Tibial artery (tissue), 4 donors: ENCODE measurements at regions of chr9 and their contacts with region 1.

Region 1: GRCh38 chr9:113275157-113276131 is at the starts of genes CDC26 and PRPF4:
- DNase-seq: peak; percentile 97 to 98
- H3K4me3 ChIP-seq: peak within 1 kb of the TSS; percentile 87 to 93
- H3K27ac ChIP-seq: peak within 1 kb of the TSS; percentile 87 to 93
- H3K4me1 ChIP-seq: peaks cover 0 to 28% (median 18%) of the 10 kb centered on the region in 4 donors
- H3K27me3 ChIP-seq: no peaks in the 10 kb centered on the region
- CTCF ChIP-seq: peak in 1 of 2 experiments; percentile 23

Region 2: DNA sequence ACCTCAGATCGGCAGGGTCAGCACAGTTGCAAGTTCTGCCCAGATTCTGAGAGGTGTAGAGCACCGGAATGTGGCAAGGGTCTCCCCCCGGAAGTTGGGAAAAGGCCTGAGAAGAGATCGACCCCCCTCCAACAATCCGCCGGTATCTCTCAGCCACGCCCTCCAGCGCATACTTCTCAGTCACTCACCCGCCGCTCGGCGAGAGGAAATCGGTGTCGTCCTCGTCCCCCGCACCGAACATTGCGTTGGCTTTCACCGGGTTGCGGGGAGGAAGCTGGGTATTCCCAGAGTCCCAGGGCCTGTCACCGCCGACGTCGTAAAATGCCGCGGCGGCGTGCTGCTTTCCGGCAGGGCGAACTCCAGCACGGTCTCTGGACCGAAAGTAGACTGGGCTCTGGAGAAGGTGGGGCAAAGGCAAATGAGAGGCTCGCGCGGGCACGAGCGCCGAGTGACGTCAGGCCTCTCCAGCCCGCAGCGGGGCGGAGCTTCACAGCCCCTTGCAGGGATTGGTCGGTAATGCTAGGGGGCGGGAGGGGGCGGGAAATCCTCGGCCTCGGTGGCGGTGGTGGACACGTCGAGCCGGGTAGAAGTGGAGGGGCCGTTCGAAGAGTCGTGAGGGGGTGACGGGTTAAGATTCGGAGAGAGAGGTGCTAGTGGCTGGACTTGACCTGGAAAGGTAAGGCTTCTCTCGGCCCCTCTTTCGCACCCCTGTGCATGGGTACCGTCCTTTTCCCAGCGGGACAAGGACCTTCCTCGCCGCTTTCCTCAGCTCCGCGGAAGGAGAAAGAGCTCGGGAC is 54.2 kb before region 1 on chr9 and contains the starts of genes FKBP15 and SLC31A1:
- intact Hi-C with region 1: loop called (anchors 10 kb)
- DNase-seq: peak; percentile 97 to 99
- H3K4me3 ChIP-seq: peak within 1 kb of the TSS; percentile 75 to 91
- H3K27ac ChIP-seq: peak within 1 kb of the TSS; percentile 85
- H3K4me1 ChIP-seq: peaks cover 0 to 38% (median 28%) of the 10 kb centered on the region in 4 donors
- H3K27me3 ChIP-seq: no peaks in the 10 kb centered on the region
- CTCF ChIP-seq: no peak

Region 3: GRCh38 chr9:113401027-113401792 is 125.8 kb after region 1 on chr9 and contains the start of gene ALAD:
- intact Hi-C with region 1: loop called (anchors 5 kb)
- DNase-seq: peak; percentile 98 to 100
- H3K4me3 ChIP-seq: peak within 1 kb of the TSS; percentile 66 to 82
- H3K27ac ChIP-seq: peak within 1 kb of the TSS; percentile 72 to 78
- H3K4me1 ChIP-seq: peaks cover 0 to 34% (median 17%) of the 10 kb centered on the region in 4 donors
- H3K27me3 ChIP-seq: no peaks in the 10 kb centered on the region
- CTCF ChIP-seq: peak; percentile 92 to 95